Psoas muscle (tissue), 8 donors: ENCODE measurements at regions of chr3 and their contacts with region 1.

Region 1: DNA sequence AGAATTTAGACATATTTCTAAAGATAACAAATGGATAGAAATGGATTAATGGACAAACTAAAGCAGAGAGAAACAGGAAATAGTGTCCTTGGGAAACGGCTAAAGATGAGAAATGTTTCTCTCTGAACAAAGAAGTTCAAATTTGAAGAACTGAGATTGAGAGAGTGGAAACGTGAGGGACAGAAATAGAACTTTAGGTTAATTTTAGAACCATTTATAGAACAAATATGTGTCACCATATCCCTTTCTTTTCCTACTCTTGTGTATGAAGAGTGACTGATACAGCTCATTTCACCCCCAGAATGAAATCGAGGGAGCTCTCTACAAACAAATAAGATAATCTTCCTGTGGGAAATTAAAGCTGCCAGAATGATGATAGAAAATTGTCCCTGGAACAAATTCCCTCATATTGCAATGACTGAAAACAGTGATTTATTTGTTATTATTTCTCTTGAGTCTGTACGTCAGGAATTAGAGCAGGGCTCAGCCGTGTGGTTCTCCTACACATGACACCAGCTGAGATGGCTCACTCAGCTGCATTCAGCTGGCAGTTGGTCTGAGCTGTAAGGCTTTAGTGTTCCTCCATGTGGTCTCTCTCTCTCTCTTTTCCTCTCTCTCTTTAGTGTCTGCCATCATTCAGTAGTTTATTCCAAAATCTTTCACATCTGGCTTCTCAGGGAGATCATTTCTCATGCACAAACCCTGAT is 46.6 kb upstream of the ARPP21 start:
- DNase-seq: no peak
- ATAC-seq: no peak
- H3K4me3 ChIP-seq: no peak overlapping the region
- H3K27ac ChIP-seq: no peak overlapping the region
- H3K4me1 ChIP-seq: no peaks in the 10 kb centered on the region
- H3K27me3 ChIP-seq: no peaks in the 10 kb centered on the region
- CTCF ChIP-seq: no peak

Region 2: GRCh38 chr3:34483311-34483887 is 1109.3 kb before region 1 on chr3:
- intact Hi-C with region 1: loop called in 1 of 2 experiments (anchors 10 kb)
- DNase-seq: no peak
- ATAC-seq: no peak
- H3K4me3 ChIP-seq: no peak overlapping the region
- H3K27ac ChIP-seq: no peak overlapping the region
- H3K4me1 ChIP-seq: no peaks in the 10 kb centered on the region
- H3K27me3 ChIP-seq: no peaks in the 10 kb centered on the region
- CTCF ChIP-seq: no peak

Region 3: GRCh38 chr3:36124118-36124796 is 531.5 kb after region 1 on chr3:
- intact Hi-C with region 1: no loop called
- DNase-seq: no peak
- ATAC-seq: no peak
- H3K4me3 ChIP-seq: no peak overlapping the region
- H3K27ac ChIP-seq: no peak overlapping the region
- H3K4me1 ChIP-seq: no peaks in the 10 kb centered on the region
- H3K27me3 ChIP-seq: no peaks in the 10 kb centered on the region
- CTCF ChIP-seq: no peak